BJ (cell line): ENCODE measurements at regions of chr1 and their contacts with region 1.

Region 1: DNA sequence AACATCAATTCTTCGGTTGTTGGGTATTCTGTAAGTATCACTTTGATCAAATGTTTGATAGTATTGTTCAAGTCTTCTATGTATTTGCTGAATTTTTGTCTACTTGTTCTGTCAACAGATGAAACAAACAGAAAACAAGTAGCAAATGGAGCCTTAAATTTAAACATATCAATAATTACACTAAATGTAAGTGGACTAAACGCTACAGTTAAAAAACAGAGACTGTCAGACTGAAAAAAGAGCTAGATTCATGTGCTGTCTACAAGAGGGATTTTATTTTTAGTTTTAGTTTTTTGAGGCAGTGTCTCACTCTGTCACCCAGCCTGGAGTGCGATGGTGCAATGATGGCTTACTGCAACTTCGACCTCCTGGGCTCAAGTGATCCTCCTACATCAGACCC is 10.7 kb upstream of the RAD54L start:
- DNase-seq: no peak
- H3K4me3 ChIP-seq: no peak overlapping the region
- H3K27me3 ChIP-seq: no peaks in the 10 kb centered on the region
- CTCF ChIP-seq: no peak

Region 2: GRCh38 chr1:46254668-46255067 is 17.8 kb after region 1 on chr1:
- CTCF ChIA-PET with region 1: no interaction called
- POLR2A ChIA-PET with region 1: interaction called, 15 read pairs
- DNase-seq: no peak
- H3K4me3 ChIP-seq: no peak overlapping the region
- H3K27me3 ChIP-seq: no peaks in the 10 kb centered on the region
- CTCF ChIP-seq: no peak